HepG2 (cell line): ENCODE measurements at regions of chr1 and their contacts with region 1.

Region 1: DNA sequence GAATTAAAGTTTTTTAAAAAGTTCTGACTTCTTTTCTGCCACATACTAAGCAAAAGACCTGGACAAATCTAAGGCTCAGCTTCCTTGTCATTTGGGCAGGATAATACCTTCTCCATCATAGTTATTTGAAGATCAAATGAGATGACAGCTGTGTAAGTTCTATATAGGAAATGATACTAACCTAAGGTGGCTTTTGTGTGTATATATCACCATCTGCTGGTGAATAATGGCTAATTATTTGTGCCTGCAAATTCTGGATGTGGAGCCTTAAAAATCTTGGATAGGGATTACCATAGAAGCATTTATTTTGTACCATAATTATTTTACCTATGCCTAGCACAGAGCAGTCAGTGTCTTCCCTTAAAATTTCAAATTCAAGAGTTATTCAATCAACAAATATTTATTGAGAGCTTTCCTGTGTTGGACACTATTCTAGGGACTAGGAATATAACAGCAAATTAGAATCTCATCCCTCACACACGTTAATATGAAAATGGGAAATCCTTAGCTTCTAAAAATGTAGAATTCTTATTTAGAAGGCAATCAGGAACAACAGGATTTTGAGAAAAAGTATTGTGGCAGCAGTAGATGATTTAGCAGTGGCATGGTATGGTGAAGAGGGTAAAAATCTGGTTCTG is 89.8 kb downstream of the TMEM200B start:
- DNase-seq: peak; percentile 50
- ATAC-seq: no peak
- H3K4me3 ChIP-seq: no peak overlapping the region
- H3K27ac ChIP-seq: no peak overlapping the region
- H3K4me1 ChIP-seq: no peaks in the 10 kb centered on the region
- H3K27me3 ChIP-seq: no peaks in the 10 kb centered on the region
- CTCF ChIP-seq: peak; percentile 67
- EP300 ChIP-seq: no peak
- POLR2A ChIP-seq: no peak
- RAD21 ChIP-seq: peak; percentile 68

Region 2: GRCh38 chr1:28775121-28775944 is 258.6 kb before region 1 on chr1:
- CTCF ChIA-PET with region 1: no interaction called
- POLR2A ChIA-PET with region 1: no interaction called
- in situ Hi-C with region 1: loop called (anchors 25 kb)
- intact Hi-C with region 1: no loop called
- DNase-seq: no peak
- ATAC-seq: peak; percentile 46
- H3K4me3 ChIP-seq: no peak overlapping the region
- H3K27ac ChIP-seq: no peak overlapping the region
- H3K4me1 ChIP-seq: peaks cover 11% of the 10 kb centered on the region
- H3K27me3 ChIP-seq: peaks cover 0 to 2% of the 10 kb centered on the region in 2 experiments; a peak in 2 of 5 replicates
- CTCF ChIP-seq: no peak
- EP300 ChIP-seq: no peak
- POLR2A ChIP-seq: no peak
- RAD21 ChIP-seq: no peak

Region 3: DNA sequence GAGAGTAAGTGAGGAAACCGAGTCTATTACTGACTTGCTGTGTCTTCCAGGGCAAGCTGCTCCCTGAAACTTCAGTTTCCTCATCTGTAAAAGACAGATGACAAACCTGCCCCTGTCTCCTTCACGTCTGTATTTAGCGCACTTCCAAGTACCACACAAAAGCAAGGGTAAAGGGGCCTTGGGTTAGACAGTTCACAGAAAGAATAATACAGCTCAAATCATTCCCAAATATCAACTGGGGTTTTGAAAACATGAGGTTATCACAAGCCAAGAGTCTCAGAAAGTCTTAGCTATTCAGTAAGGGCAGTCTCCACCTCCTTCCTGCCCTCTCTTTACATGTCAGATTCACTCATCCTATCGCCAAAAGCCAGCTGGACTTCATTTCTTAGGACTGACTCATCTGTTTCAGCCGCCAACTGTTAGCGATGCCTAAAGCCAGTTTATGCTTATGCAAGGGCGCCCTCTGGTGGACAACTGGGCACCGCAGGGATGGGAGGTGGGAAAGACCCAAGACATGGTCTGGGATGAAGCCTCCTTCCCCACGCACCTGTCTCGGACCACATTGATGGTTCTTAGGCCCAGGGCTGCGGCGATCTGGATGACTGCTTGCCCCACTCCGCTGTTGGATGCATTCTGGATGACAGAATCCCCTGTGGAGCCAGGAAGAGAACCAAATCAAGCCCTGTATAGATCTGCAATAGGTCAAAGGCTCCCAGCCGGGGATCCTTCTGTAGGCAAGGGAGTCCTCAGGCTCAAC is 168.8 kb after region 1 on chr1:
- CTCF ChIA-PET with region 1: no interaction called
- POLR2A ChIA-PET with region 1: no interaction called
- in situ Hi-C with region 1: no loop called
- intact Hi-C with region 1: loop called (anchors 5 kb)
- DNase-seq: peak; percentile 89
- ATAC-seq: peak; percentile 97
- H3K4me3 ChIP-seq: no peak overlapping the region
- H3K27ac ChIP-seq: no peak overlapping the region
- H3K4me1 ChIP-seq: peaks cover 6% of the 10 kb centered on the region
- H3K27me3 ChIP-seq: no peaks in the 10 kb centered on the region
- CTCF ChIP-seq: peak; percentile 99
- EP300 ChIP-seq: no peak
- POLR2A ChIP-seq: no peak
- RAD21 ChIP-seq: peak; percentile 95